ENCODE measurements at regions of chr5 and their contacts with region 1.

Region 1: GRCh38 chr5:153496835-153497234 is 6.4 kb downstream of the GRIA1 start:
- DNase-seq: no peak
- ATAC-seq: peak; percentile 46 to 59
- H3K4me3 ChIP-seq: no peak overlapping the region
- H3K27ac ChIP-seq: no peak overlapping the region
- H3K4me1 ChIP-seq: no peaks in the 10 kb centered on the region
- H3K27me3 ChIP-seq: no peaks in the 10 kb centered on the region
- CTCF ChIP-seq: peak; percentile 71

Region 2: DNA sequence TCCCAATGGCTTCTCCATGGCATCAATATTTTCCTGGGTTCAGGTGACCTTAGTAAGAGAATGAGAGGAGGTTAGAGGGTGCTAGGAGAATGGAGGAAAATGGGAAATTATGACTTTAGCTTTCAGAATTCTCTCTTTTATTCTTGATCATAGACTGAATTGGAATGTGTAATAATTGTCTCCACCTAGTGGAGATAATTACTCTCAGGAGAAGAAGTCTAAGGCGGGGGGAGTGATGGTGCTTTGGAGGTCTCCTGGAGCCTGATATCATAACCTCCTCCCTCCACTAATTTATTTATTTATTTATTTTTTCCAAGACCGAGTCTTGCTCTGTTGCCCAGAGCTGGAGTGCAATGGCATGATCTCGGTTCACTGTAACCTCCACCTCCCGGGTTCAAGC is 214.9 kb after region 1 on chr5:
- intact Hi-C with region 1: loop called (anchors 5 kb)
- DNase-seq: no peak
- ATAC-seq: no peak
- H3K4me3 ChIP-seq: no peak overlapping the region
- H3K27ac ChIP-seq: no peak overlapping the region
- H3K4me1 ChIP-seq: no peaks in the 10 kb centered on the region
- H3K27me3 ChIP-seq: no peaks in the 10 kb centered on the region
- CTCF ChIP-seq: peak; percentile 17

Region 3: DNA sequence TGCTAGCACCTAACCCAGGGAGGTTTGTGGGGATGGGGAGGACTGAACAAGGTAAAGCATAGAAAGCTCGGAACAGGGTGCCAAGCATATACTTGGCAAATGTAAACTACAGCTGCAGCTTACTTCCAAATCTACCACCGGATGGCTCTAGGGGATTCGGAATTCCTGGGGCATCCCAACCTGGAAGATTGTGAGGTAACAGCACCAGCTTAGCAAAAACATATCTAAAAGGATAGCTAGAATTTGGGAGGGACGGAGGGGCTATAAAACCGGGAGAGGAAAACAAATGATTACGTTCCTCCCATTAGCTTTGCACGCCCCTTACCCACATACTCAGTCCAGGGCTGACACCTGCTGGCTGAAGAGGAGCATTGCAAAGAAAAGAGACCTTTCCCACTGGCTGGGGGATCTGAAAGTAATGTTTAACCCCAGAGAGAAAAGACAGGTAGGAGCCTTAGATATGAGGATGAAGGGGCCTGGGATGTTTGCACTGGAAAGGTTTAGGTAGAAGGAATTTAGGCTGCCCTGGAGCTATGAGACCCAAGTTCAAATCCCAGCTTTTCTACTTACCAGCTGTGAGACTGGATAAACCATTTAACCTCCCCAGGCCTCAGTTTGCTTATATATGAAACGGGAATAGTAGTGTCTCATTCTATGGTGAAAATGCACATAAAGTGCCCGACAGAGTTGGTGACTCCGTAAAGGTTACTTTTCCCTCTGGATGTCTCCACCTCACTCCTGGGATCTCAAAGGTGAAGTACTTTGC is 468.2 kb after region 1 on chr5:
- intact Hi-C with region 1: loop called (anchors 10 kb)
- DNase-seq: no peak
- ATAC-seq: peak; percentile 73 to 83
- H3K4me3 ChIP-seq: no peak overlapping the region
- H3K27ac ChIP-seq: no peak overlapping the region
- H3K4me1 ChIP-seq: peaks cover 8% of the 10 kb centered on the region
- H3K27me3 ChIP-seq: no peaks in the 10 kb centered on the region
- CTCF ChIP-seq: peak; percentile 81

Region 4: GRCh38 chr5:153998010-153998409 is 501.2 kb after region 1 on chr5:
- intact Hi-C with region 1: no loop called
- DNase-seq: no peak
- ATAC-seq: no peak
- H3K4me3 ChIP-seq: no peak overlapping the region
- H3K27ac ChIP-seq: no peak overlapping the region
- H3K4me1 ChIP-seq: peaks cover 6% of the 10 kb centered on the region
- H3K27me3 ChIP-seq: no peaks in the 10 kb centered on the region
- CTCF ChIP-seq: no peak